ENCODE measurements at regions of chr16 and their contacts with region 1.

Region 1: DNA sequence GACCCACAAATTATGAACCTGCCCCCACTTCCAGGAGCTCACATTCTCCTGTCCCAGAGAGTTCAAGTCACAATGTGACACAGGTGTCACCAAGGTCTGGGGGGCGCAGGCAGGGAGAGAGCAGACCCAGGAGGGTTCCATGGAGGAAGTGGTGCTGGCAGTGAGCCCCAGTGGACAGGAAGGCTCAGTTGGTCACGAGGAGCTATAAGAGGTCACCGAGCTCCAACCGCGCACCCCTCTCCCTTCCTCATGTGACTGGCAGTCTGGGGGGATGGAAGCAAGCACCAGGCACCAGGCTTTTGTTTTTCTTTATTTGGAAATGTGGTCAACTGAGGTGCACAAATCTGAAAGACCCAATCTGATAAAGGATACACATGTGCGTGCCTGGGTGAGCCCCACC is 2.5 kb downstream of the ITGAD start:
- DNase-seq: no peak
- ATAC-seq: no peak
- H3K4me3 ChIP-seq: no peak overlapping the region
- H3K27ac ChIP-seq: no peak overlapping the region
- H3K4me1 ChIP-seq: no peaks in the 10 kb centered on the region
- H3K27me3 ChIP-seq: no peaks in the 10 kb centered on the region
- CTCF ChIP-seq: no peak

Region 2: DNA sequence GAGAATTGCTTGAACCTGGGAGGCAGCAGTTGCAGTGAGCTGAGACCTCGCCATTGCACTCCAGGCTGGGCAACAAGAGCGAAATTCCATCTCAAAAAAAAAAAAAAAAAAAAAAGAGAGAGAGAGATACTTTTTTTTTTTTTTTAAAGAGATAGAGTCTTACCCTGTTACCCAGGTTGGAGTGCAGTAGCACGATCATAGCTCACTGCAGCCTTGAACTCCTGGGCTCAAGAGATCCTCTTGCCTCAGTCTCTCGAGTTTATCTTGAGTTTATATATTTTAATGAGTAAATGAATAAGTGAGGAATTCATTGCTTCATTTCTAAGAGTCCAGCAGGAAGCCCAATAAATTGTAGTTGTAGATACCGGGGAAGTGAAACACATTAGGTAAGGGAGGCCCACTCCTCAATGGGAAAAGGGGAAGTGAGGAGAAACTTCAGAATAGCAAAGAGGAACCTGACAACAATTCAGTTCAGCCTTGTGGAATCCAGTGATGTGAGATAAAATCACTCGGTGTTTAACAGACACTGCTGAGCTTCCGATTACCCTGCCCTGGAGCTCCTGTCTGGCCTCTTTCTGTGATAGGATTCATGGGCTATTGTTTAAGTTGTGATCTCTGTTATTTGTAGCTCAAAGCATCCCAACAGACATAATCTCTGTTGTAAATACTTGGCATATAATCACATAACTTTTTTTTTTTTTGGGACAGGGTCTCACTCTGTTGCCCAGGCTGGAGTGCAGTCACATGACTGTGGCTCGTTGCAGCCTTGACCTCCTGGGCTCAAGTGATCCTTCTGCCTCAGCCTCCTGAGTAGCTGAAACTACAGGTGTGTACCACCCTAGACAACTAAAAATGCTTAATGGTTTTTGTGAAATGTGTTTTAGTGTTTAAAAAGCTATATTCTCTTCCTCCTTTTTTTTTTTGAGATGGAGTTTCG is 151.6 kb before region 1 on chr16:
- intact Hi-C with region 1: loop called in 1 of 2 experiments (anchors 10 kb)
- DNase-seq: no peak
- ATAC-seq: no peak
- H3K4me3 ChIP-seq: no peak overlapping the region
- H3K27ac ChIP-seq: no peak overlapping the region
- H3K4me1 ChIP-seq: no peaks in the 10 kb centered on the region
- H3K27me3 ChIP-seq: peaks cover 0 to 3% (median 0%) of the 10 kb centered on the region in 3 donors
- CTCF ChIP-seq: no peak

Region 3: GRCh38 chr16:31365131-31365865 is 30.3 kb before region 1 on chr16:
- intact Hi-C with region 1: no loop called
- DNase-seq: peak in 1 of 2 donors; percentile 10
- ATAC-seq: no peak
- H3K4me3 ChIP-seq: no peak overlapping the region
- H3K27ac ChIP-seq: no peak overlapping the region
- H3K4me1 ChIP-seq: no peaks in the 10 kb centered on the region
- H3K27me3 ChIP-seq: no peaks in the 10 kb centered on the region
- CTCF ChIP-seq: no peak

Measured in psoas muscle (tissue), 8 donors.